Prostate gland (tissue), 2 donors: ENCODE measurements at regions of chr15 and their contacts with region 1.

Region 1: DNA sequence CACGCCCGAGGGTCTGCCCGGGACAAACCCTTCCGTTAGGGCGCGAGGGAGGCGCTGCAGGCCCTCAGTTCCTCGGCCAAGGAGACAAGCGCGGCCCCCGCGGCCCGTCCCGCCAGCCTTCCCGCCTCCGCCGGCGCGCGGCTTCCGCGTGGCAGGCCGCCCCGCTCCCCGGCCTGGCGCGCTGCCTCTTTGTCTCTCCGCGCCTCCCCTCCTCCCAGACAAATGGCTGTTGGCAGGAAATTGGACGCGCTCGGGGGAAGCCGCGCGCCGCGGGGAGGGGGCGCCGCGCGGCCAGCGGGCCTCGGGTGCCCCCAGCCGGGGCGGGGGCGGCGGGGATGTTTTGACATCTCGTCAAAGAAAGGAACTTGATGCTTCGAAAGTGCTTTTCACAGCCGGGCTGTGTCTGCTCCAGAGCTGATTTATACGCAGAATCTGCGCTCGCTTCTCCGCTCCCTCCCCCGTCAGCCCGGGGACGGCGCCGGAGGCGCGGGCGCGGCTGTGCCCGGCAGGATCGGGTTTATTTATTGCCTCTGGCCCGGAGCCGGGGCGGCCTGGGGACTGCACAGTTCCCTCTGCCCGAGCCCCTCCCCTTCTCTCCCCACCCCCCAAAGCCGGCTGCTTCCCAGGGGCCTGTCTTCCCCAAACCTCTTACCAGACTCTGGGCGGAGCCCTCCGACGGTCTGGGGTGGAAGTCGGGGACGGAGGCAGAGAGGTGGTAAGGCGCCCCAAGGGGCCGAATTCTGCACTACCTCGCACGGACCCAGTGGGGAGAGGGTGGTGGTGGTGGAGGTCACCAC is 20.7 kb downstream of the SHF start:
- DNase-seq: peak; percentile 72
- H3K4me3 ChIP-seq: peak overlapping the region; percentile 53 to 63
- H3K27ac ChIP-seq: peak overlapping the region; percentile 95 to 96
- H3K4me1 ChIP-seq: peaks cover 4% of the 10 kb centered on the region
- H3K27me3 ChIP-seq: no peaks in the 10 kb centered on the region
- CTCF ChIP-seq: peak in 3 of 4 experiments; percentile 47 to 61 (median 61)
- POLR2A ChIP-seq: peak; percentile 25

Region 2: DNA sequence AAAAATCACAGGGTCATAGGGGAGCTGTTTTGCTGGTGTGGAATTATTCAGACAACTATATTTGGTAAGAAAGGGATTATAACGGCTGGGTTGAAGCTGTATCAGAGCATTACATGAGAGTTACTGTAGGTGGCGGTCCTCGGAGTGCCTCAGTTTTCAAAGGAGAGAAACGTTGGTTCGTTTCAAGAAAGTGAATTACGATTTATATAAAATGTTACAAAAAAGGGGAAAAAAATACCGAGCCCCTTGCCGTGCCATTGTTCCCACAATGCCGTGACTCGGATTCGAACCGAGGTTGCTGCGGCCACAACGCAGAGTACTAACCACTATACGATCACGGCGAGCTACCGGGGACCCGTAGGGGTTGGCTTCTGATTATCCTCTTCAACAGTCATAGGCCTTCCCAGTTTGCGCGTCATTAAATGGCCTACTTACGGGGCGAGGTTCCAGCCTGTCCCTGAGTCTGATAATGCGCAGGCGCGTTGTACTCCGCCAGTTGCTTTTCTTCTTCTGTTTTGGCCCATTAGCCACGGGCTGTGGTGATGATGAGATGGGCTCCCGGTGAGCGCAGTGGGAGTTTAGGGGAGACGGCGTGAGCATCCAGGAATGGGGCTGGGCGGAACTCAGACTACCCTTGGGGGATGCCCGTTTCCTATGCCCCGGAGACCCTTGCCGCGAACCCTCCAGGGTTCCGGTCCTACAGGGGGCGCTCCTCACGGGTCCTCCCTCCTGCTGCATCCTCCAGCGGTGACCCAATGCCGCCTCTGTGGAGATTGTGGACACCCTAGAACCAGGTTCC is 31.5 kb after region 1 on chr15:
- intact Hi-C with region 1: loop called (anchors 2 kb)
- DNase-seq: peak; percentile 96
- H3K4me3 ChIP-seq: peak overlapping the region; percentile 55 to 58
- H3K27ac ChIP-seq: peak overlapping the region; percentile 99
- H3K4me1 ChIP-seq: no peaks in the 10 kb centered on the region
- H3K27me3 ChIP-seq: no peaks in the 10 kb centered on the region
- CTCF ChIP-seq: peak; percentile 65 to 86 (median 80)
- POLR2A ChIP-seq: peak; percentile 89

Region 3: DNA sequence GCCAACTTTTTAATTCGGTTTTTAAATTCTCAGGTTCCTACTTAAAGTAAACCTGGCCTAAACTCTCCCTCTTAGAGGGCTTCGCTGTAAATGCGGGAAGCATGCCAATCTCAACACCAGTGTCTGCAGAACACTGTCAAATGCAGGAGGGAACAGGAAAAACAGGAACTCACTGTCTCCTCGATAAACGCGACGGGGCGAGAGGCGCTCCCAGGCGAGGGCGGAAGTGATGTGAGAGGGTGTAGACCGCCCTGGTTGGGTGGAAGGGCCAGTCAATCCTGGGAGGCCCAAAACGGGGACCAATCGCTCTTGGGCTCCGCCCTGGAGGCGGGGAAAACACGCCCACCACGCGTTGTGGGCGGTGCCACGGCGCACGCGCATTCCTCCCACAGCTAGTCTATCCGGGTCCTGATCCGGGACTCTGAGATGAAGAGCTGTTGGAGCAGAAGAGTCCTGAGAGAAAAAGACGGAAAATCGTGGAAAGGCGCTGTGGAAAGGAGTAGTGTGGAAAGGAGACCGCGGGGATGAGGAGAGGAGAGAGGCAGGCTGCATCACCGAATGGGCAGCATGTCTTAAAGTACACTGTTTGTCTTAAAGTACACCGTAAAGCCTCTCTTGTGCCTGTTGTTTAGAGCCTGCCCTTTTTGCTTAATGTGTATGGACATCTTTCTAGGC is 112.1 kb after region 1 on chr15:
- intact Hi-C with region 1: loop called (anchors 2 kb)
- DNase-seq: peak; percentile 98
- H3K4me3 ChIP-seq: peak overlapping the region; percentile 46 to 47
- H3K27ac ChIP-seq: peak overlapping the region; percentile 88 to 90
- H3K4me1 ChIP-seq: no peaks in the 10 kb centered on the region
- H3K27me3 ChIP-seq: no peaks in the 10 kb centered on the region
- CTCF ChIP-seq: peak in 2 of 4 experiments; percentile 21 to 24
- POLR2A ChIP-seq: peak; percentile 76

Region 4: DNA sequence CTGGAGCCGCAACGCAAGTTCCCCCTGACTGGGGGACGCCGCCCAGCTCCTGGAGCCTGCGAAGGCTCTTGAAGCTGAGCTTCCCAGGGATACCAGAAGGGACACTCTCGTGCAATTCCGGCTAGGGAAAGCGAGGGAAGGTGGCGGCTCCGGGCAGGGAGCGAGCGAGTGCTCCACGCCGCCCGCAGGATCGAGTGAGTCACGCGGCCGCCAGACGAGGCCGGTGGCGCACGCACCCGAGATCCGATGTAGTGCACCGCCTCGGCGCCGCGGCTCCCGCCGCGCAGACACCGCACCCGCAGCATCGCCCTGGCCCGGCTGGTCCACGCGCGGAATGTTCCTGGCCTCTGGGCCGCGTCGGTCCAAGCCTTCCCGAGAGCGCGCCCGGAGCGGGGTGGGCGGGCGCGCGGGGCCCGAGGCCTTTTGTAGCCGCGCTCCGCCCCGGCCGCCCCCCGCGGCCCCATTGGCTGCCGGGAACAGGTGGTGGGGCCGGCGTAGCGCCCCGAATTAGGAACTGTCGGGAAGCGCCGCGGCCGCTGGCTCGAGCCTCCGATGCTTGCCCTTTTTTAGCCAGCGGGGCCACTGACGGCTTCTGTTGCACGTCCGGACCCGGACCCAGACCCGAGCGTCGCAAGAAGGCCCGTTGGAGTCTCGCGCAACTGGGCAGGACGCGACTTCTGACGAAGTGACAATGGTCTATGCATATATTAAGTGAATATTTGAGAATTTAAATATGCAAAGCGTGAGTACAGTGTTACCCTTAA is 211.3 kb after region 1 on chr15 and contains the start of gene GATM:
- intact Hi-C with region 1: loop called (anchors 10 kb)
- DNase-seq: peak; percentile 58
- H3K4me3 ChIP-seq: peak within 1 kb of the TSS; percentile 43 to 45
- H3K27ac ChIP-seq: peak within 1 kb of the TSS; percentile 48 to 69
- H3K4me1 ChIP-seq: no peaks in the 10 kb centered on the region
- H3K27me3 ChIP-seq: no peaks in the 10 kb centered on the region
- CTCF ChIP-seq: peak in 2 of 4 experiments; percentile 35 to 47
- POLR2A ChIP-seq: no peak
- total RNA-seq, gene GATM: 12.9 to 254 TPM

Region 5: DNA sequence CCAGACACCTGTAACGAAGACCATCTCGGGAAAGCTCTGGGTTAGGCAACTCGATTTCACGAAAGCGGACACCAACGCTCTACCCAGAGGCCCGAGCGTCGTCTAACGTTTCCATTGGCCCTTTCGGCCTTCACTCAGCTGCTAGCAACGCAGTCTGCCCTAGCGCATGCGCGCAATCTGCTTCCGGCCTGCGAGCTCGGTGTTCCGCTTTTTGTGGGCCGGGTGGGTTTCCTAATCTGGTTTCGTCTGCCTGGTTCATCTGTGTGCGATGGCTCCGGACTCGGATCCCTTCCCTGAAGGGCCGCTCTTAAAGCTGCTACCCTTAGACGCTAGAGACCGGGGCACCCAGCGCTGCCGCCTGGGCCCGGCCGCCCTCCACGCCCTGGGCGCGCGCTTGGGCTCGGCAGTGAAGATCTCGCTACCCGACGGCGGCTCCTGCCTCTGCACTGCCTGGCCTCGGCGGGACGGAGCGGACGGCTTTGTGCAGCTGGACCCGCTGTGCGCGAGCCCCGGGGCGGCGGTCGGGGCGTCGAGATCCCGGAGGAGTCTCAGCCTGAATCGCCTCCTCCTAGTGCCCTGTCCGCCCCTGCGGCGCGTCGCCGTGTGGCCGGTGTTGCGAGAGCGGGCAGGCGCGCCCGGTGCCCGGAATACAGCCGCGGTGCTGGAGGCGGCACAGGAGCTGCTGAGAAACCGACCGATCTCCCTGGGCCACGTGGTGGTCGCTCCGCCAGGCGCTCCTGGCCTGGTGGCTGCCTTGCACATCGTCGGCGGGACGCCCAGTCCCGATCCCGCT is 235.3 kb after region 1 on chr15:
- intact Hi-C with region 1: loop called (anchors 5 kb)
- DNase-seq: peak; percentile 94
- H3K4me3 ChIP-seq: peak overlapping the region; percentile 88 to 94
- H3K27ac ChIP-seq: peak overlapping the region; percentile 82 to 92
- H3K4me1 ChIP-seq: no peaks in the 10 kb centered on the region
- H3K27me3 ChIP-seq: no peaks in the 10 kb centered on the region
- CTCF ChIP-seq: peak in 1 of 4 experiments; percentile 12
- POLR2A ChIP-seq: peak; percentile 77

Region 6: DNA sequence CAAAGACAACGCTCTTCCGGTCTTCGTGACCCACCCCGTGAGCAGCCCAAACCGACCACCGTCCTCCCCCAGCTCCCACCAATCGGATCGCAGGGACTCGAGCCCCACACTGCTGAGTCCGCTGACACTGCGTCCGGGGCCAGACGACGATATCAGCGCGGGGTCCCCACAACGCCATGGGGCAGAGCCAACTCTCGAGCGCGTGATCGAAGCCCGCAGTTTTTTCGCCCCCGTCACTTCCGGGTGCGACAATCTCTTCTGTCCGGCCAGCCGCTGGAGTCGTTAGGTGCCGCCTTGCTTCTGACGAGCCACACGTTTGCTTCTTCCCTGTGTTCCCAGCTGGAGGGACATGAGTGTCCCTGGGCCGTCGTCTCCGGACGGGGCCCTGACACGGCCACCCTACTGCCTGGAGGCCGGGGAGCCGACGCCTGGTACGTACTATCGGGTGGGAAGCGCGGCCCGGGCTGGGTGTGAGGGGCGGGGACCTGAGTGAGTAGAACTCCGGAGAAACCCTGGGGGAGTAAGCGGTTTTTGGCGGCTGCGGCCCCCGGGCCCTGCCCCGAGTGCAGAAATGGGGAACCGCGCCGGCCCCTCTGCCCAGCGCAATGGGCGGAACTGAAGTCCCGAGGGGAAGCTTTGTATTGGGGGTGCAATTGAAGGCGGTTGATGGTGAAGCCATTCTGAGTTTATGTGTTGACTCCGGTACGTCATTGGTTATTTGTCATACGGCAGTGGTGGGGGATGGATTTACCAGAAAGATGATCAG is 420.2 kb after region 1 on chr15 and contains the start of gene BLOC1S6:
- intact Hi-C with region 1: loop called (anchors 10 kb)
- DNase-seq: peak; percentile 81
- H3K4me3 ChIP-seq: peak within 1 kb of the TSS; percentile 91 to 95
- H3K27ac ChIP-seq: peak within 1 kb of the TSS; percentile 98 to 99
- H3K4me1 ChIP-seq: no peaks in the 10 kb centered on the region
- H3K27me3 ChIP-seq: no peaks in the 10 kb centered on the region
- CTCF ChIP-seq: no peak
- POLR2A ChIP-seq: peak; percentile 52
- total RNA-seq, gene BLOC1S6: 46.0 to 82.5 TPM